Activated CD4-positive, alpha-beta T cell treated with anti-CD3 and anti-CD28 coated beads for 36 hours (primary cell): ENCODE measurements at regions of chr1 and their contacts with region 1.

Region 1: GRCh38 chr1:24541711-24542346 is 14.1 kb upstream of the NCMAP start:
- DNase-seq: peak; percentile 68
- ATAC-seq: no peak
- H3K4me3 Mint-ChIP-seq: peak overlapping the region; percentile 48
- H3K27ac Mint-ChIP-seq: peak overlapping the region; percentile 93
- H3K4me1 Mint-ChIP-seq: peaks cover 69% of the 10 kb centered on the region
- H3K27me3 Mint-ChIP-seq: no peaks in the 10 kb centered on the region

Region 2: GRCh38 chr1:24186993-24187805 is 354.6 kb before region 1 on chr1 and contains the start of gene IFNLR1:
- CTCF ChIA-PET with region 1: no interaction called
- POLR2A ChIA-PET with region 1: no interaction called
- intact Hi-C with region 1: loop called (anchors 1 to 5 kb)
- DNase-seq: peak; percentile 93
- ATAC-seq: peak; percentile 88
- H3K4me3 Mint-ChIP-seq: peak within 1 kb of the TSS; percentile 73
- H3K27ac Mint-ChIP-seq: peak within 1 kb of the TSS; percentile 71
- H3K4me1 Mint-ChIP-seq: peaks cover 47% of the 10 kb centered on the region
- H3K27me3 Mint-ChIP-seq: no peaks in the 10 kb centered on the region
- total RNA-seq, gene IFNLR1: 6.6 to 7.4 TPM

Region 3: DNA sequence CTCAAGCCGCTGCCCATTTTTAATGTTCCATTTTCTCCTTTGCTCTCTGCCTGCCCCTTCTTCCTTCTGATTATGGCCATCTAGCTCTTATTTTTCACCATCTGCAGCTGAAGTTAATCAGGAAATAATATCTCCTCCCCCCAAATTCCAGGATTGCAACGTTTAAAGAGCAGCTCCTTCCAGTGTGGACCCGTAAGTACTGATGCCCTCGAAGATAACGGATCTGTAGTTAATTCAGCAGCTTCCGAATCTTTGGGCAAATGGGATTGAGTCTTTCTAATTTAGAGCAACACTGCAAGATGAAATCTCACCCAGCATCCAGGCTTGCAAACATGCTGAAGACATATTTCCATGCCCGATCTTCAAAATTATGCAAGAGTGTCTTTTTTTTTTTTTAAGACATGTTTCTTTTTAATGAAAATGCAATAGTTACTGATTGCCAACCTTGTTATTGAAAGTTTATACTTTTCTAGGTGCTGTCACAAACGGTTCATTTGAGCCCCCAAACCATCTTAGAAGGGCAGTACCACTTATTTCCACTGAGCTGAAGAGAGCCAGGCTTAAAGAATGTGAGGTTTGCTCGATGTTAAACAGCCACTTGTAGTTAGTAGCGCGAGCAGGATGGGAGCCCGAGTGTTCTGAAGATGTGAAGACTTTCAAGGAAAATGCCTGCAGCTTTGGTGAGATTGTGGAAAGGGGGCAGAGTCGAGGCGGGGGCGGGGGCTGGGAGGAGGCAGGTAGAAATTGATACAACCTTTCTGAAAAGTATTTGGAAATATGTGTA is 50.1 kb before region 1 on chr1:
- CTCF ChIA-PET with region 1: interaction called, 9 read pairs
- POLR2A ChIA-PET with region 1: interaction called, 4 read pairs
- intact Hi-C with region 1: loop called in 1 of 2 experiments (anchors 1 kb)
- DNase-seq: no peak
- ATAC-seq: no peak
- H3K4me3 Mint-ChIP-seq: no peak overlapping the region
- H3K27ac Mint-ChIP-seq: no peak overlapping the region
- H3K4me1 Mint-ChIP-seq: peaks cover 45% of the 10 kb centered on the region
- H3K27me3 Mint-ChIP-seq: no peaks in the 10 kb centered on the region

Region 4: DNA sequence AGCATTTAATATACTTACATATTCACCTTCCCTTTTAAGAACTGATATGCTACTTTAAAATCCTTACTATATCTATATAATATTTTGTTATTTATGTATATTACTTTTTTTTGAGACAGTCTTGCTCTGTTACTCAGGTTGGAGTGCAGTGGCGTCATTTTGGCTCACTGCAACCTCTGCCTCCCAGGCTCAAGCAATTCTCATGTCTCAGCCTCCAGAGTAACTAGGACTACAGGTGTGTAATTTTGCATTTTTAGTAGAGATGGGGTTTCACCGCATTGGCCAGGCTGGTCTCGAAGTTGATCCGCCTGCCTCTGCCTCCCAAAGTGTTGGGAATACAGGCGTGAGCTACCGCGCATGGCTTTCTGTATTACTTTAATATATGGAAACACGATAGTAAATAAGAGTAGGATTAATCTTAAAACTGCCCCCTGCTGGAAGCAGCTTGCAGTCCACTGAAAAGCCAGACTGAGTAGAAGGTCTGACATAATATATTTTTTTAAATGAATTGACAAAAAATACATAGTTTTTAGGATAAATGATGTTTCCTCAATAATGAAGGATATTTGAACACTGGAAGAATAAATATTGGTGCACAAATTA is 14.8 kb before region 1 on chr1:
- CTCF ChIA-PET with region 1: interaction called, 30 read pairs
- POLR2A ChIA-PET with region 1: no interaction called
- intact Hi-C with region 1: no loop called
- DNase-seq: peak; percentile 68
- ATAC-seq: peak; percentile 76
- H3K4me3 Mint-ChIP-seq: no peak overlapping the region
- H3K27ac Mint-ChIP-seq: no peak overlapping the region
- H3K4me1 Mint-ChIP-seq: peaks cover 71% of the 10 kb centered on the region
- H3K27me3 Mint-ChIP-seq: no peaks in the 10 kb centered on the region

Region 5: DNA sequence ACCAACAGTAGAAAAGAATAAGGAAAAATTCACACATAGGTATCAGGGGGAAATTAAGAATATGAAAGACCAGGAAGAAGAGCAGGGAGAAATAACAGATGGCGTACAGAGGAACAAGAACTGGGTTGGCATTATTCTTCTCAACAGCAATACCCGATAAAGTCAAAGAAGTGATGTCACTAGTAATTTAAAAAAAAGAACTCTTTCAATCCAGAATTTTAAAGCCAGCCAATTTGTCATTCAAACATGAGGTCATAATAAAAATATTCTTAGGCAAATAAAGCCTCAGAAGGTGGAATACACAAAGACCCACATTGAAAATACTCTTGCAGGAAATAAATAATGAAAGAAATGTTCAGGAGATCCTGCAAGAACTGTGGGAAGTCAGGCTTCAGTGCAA is 22.9 kb after region 1 on chr1:
- CTCF ChIA-PET with region 1: no interaction called
- POLR2A ChIA-PET with region 1: no interaction called
- intact Hi-C with region 1: no loop called
- DNase-seq: no peak
- ATAC-seq: no peak
- H3K4me3 Mint-ChIP-seq: no peak overlapping the region
- H3K27ac Mint-ChIP-seq: no peak overlapping the region
- H3K4me1 Mint-ChIP-seq: peaks cover 13% of the 10 kb centered on the region
- H3K27me3 Mint-ChIP-seq: no peaks in the 10 kb centered on the region

Region 6: GRCh38 chr1:24635195-24635843 is 93.5 kb after region 1 on chr1:
- CTCF ChIA-PET with region 1: interaction called, 7 read pairs
- POLR2A ChIA-PET with region 1: no interaction called
- intact Hi-C with region 1: loop called (anchors 1 kb)
- DNase-seq: no peak
- ATAC-seq: peak; percentile 84
- H3K4me3 Mint-ChIP-seq: no peak overlapping the region
- H3K27ac Mint-ChIP-seq: no peak overlapping the region
- H3K4me1 Mint-ChIP-seq: peaks cover 12% of the 10 kb centered on the region
- H3K27me3 Mint-ChIP-seq: peaks cover 2% of the 10 kb centered on the region